Activated T-helper 2 cell treated with anti-CD3 and anti-CD28 coated beads, Interferon-gamma antibody, Interleukin-2, Interleukin-4, amounts not matched to agents 10 μg/mL and 5 μg/mL and 100 μg/mL, durations not matched to agents 14 hours and 24 hours and 36 hours (primary cell): ENCODE measurements at regions of chr22 and their contacts with region 1.

Region 1: DNA sequence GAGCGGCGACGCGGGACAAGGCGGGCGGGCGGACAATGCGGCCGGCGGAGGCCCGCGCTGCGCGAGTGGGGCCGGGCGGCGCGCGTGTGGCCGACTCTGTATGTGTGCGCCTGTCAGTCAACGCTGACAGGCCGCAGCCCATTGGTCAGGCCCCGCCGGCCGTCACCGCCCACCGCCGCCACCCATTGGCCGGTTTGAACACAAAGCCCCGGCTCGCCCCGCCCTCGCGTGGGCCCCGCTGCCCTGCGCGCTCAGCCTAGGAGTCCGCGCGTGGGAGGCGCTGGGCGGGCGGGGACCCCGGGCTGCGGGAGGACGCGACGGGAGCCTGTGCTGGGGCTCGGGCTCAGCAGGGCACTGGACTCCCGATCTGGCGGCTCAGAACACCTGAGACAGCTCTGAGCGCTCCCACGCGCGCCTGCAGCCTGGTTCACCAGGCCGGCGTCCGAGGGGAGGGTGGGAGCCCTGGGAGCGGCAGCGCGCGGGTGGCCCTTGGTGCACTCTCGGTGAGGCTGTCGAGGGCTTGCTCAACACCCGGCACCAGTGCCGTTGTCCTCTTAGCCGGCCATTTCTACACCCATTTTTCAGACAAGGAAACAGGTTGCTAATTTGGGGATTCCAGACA is at the start of gene SUN2:
- DNase-seq: peak; percentile 91
- H3K4me3 Mint-ChIP-seq: peak within 1 kb of the TSS; percentile 96
- H3K27ac Mint-ChIP-seq: peak within 1 kb of the TSS; percentile 95
- H3K4me1 Mint-ChIP-seq: peaks cover 49% of the 10 kb centered on the region
- H3K27me3 Mint-ChIP-seq: no peaks in the 10 kb centered on the region
- total RNA-seq, gene SUN2: 121 and 123 TPM in 2 replicates

Region 2: GRCh38 chr22:38733329-38733723 is 22.7 kb before region 1 on chr22:
- intact Hi-C with region 1: loop called (anchors 2 kb)
- DNase-seq: no peak
- H3K4me3 Mint-ChIP-seq: no peak overlapping the region
- H3K27ac Mint-ChIP-seq: peak overlapping the region; percentile 58
- H3K4me1 Mint-ChIP-seq: peaks cover 16% of the 10 kb centered on the region
- H3K27me3 Mint-ChIP-seq: no peaks in the 10 kb centered on the region

Region 3: DNA sequence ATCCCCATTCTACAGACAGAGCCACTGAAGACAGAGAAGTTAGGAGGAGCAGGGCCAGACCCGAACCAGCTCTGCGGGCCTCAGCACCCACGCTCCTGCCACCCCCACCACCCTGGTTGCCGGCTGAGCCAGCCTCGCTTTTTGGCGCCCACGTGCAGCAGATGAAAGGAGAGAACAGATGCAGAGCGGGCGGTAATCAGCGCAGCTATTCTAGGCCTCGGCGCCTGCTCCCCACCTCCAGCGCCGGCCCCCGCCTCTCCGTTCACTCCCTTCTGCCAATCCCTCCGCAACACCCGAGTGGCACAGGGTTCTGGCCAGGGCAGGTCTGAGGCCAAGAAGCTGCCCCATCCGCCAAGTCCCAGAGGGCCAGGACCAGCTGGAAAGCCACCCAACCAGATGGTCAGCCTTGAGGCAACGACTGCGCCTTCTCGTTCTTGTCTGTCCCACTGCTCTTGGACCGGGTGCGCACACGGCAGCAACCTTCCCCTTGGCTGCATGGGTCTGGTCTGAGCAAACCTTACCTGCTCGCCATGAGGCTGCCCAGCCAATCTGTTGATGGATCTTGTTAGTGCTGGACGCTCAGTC is 21.2 kb after region 1 on chr22:
- intact Hi-C with region 1: no loop called
- DNase-seq: no peak
- H3K4me3 Mint-ChIP-seq: no peak overlapping the region
- H3K27ac Mint-ChIP-seq: no peak overlapping the region
- H3K4me1 Mint-ChIP-seq: no peaks in the 10 kb centered on the region
- H3K27me3 Mint-ChIP-seq: no peaks in the 10 kb centered on the region

Region 4: DNA sequence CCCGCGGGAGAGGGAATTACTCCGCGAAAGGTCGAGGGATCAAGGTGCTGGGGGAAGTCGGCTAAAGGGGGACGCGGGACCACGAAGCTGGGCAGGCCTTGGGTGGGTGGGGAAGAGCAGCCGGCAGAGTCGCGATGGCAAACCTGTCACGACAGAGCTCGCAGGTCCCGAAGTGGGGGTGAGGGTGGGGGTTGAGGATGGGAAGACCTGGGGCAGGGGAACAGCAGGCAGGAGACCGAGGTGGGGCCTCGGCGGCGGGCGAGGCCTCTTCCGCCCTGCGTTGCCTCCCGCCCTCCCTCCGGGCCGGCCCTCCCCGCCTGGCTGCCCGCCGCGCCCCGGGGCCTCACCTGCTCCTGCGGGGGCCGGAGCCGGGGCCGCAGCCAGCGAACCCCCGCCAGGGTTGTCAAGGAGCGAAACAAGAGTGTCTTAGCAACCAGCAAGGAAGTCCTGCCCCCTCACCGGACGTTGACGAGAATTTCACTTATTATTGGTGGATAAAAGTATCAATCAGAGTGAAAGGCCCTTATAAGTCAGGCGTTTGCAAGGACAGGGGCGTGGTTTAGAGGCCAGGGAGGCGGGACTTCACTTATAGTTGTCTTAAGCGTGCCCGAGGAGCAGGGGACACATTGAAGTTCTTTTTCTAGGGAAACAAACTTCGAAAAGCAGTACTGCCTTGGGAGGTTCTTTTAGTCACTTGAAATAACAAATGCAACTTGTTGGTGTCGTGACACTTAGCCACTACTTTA is 37.9 kb after region 1 on chr22 and contains the start of gene DNAL4:
- intact Hi-C with region 1: loop called (anchors 5 kb)
- DNase-seq: peak; percentile 89
- H3K4me3 Mint-ChIP-seq: peak within 1 kb of the TSS; percentile 86
- H3K27ac Mint-ChIP-seq: peak within 1 kb of the TSS; percentile 59
- H3K4me1 Mint-ChIP-seq: peaks cover 13% of the 10 kb centered on the region
- H3K27me3 Mint-ChIP-seq: peaks cover 11% of the 10 kb centered on the region
- total RNA-seq, gene DNAL4: 4.7 and 6.1 TPM in 2 replicates

Region 5: GRCh38 chr22:39097098-39098020 is 341.3 kb after region 1 on chr22 and contains the start of gene APOBEC3H:
- intact Hi-C with region 1: loop called (anchors 10 kb)
- DNase-seq: peak; percentile 31
- H3K4me3 Mint-ChIP-seq: peak within 1 kb of the TSS; percentile 75
- H3K27ac Mint-ChIP-seq: peak within 1 kb of the TSS; percentile 92
- H3K4me1 Mint-ChIP-seq: peaks cover 66% of the 10 kb centered on the region
- H3K27me3 Mint-ChIP-seq: no peaks in the 10 kb centered on the region
- total RNA-seq, gene APOBEC3H: 7.3 and 8.3 TPM in 2 replicates